BJ (cell line): ENCODE measurements at regions of chr5 and their contacts with region 1.

Region 1: GRCh38 chr5:35182541-35183535 is 47.4 kb downstream of the PRLR start:
- DNase-seq: no peak
- H3K4me3 ChIP-seq: no peak overlapping the region
- H3K27me3 ChIP-seq: peaks cover 1% of the 10 kb centered on the region
- CTCF ChIP-seq: peak; percentile 72

Region 2: GRCh38 chr5:35089334-35090314 is 93.2 kb before region 1 on chr5:
- CTCF ChIA-PET with region 1: interaction called, 21 read pairs
- POLR2A ChIA-PET with region 1: no interaction called
- DNase-seq: peak; percentile 33
- H3K4me3 ChIP-seq: no peak overlapping the region
- H3K27me3 ChIP-seq: no peaks in the 10 kb centered on the region
- CTCF ChIP-seq: peak; percentile 87

Region 3: GRCh38 chr5:35194635-35195471 is 12.0 kb after region 1 on chr5:
- CTCF ChIA-PET with region 1: interaction called, 20 read pairs
- POLR2A ChIA-PET with region 1: no interaction called
- DNase-seq: no peak
- H3K4me3 ChIP-seq: no peak overlapping the region
- H3K27me3 ChIP-seq: peaks cover 9% of the 10 kb centered on the region
- CTCF ChIP-seq: no peak

Region 4: GRCh38 chr5:35246900-35247647 is 64.2 kb after region 1 on chr5:
- CTCF ChIA-PET with region 1: no interaction called
- POLR2A ChIA-PET with region 1: no interaction called
- DNase-seq: no peak
- H3K4me3 ChIP-seq: no peak overlapping the region
- H3K27me3 ChIP-seq: peaks cover 1% of the 10 kb centered on the region; the same call in 1 of the 2 replicates
- CTCF ChIP-seq: no peak

Region 5: DNA sequence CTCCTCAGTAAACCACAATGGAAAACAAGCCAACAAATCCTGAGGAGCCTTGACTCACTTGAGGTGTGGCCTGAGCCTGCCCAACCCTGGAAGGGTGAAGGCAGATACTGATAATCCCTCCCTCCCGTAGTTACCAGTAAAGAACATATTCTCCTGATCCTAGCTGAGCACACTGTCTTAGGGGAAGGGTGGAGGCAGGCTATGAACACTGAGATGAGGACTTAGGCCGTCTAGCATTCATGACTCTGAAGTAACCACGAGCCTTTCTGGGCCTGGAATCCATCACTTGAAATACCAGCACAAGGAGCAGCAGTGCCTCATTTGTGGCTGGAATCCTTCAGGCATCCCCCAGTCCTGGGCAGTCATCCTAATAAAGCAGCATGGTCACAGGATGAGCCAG is 171.9 kb after region 1 on chr5:
- CTCF ChIA-PET with region 1: no interaction called
- POLR2A ChIA-PET with region 1: no interaction called
- DNase-seq: peak; percentile 23
- H3K4me3 ChIP-seq: no peak overlapping the region
- H3K27me3 ChIP-seq: no peaks in the 10 kb centered on the region
- CTCF ChIP-seq: no peak